ENCODE measurements at regions of chr4 and their contacts with region 1.

Region 1: DNA sequence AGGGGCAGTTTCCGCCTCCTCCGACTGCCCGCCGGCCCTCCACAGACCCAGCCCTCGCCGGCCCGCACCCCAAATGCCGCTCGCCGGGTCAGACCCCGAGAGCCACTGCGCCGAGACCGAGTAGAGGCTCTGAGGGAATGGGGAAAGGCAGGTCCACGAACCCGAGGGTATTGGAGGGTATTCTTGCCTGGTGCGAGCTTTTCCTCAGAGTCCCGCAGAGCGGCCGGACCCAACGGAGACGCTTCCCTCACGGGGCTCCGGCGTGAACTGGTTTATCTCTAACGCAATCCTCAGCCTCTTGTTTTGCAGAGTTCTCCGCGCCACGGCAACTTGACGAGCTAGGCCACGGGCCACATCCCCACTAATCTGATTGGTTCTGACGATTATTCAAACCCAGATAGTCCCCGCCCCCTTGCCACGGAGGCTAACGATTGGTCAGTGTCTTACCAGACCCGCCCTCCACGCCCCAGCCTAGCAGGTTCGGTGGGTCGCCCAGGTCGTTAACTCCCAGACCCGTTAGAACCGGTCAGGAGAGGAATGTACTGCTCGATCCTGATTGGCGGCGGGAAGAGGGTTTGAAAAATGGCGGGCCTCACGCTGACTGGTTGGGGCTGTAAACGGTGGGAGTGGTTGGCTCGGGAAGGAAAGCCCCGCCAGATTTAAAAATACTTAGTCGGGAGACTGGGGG is at the start of gene HMGB2:
- DNase-seq: peak; percentile 99
- ATAC-seq: peak; percentile 85
- H3K4me3 ChIP-seq: peak within 1 kb of the TSS; percentile 93 to 95
- H3K27ac ChIP-seq: peak within 1 kb of the TSS; percentile 96
- H3K4me1 ChIP-seq: peaks cover 10 to 26% of the 10 kb centered on the region in 2 experiments; a peak in 3 of 4 replicates
- H3K27me3 ChIP-seq: no peaks in the 10 kb centered on the region
- CTCF ChIP-seq: no peak
- POLR2A ChIP-seq: peak; percentile 78
- RAD21 ChIP-seq: no peak
- total RNA-seq, gene HMGB2: 388 TPM

Region 2: GRCh38 chr4:172900930-172901329 is 433.3 kb before region 1 on chr4:
- CTCF ChIA-PET with region 1: no interaction called
- POLR2A ChIA-PET with region 1: no interaction called
- RAD21 ChIA-PET with region 1: no interaction called
- intact Hi-C with region 1: no loop called
- DNase-seq: no peak
- ATAC-seq: no peak
- H3K4me3 ChIP-seq: no peak overlapping the region
- H3K27ac ChIP-seq: no peak overlapping the region
- H3K4me1 ChIP-seq: no peaks in the 10 kb centered on the region
- H3K27me3 ChIP-seq: no peaks in the 10 kb centered on the region
- CTCF ChIP-seq: no peak
- POLR2A ChIP-seq: no peak
- RAD21 ChIP-seq: no peak

Region 3: DNA sequence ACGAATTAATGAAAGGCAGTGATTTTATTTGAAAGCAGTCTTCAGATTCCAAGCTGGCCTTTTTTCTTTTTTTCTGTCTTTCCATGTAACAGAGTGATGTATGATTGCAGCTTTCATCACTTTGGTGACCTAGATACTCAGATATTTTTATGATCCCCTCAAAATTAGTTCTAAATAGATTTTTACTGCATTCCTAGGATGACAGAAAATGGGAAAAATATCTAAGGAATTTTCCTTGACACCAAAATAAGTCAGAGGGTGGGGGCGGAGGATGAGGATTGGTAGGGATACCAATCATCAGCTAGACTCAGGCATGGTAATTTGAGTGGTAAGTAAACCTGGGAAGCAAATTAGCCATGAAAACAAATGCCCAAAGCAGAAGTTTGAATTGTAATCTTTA is 11.8 kb after region 1 on chr4:
- CTCF ChIA-PET with region 1: no interaction called
- POLR2A ChIA-PET with region 1: interaction called, 12 read pairs
- RAD21 ChIA-PET with region 1: no interaction called
- intact Hi-C with region 1: no loop called
- DNase-seq: no peak
- ATAC-seq: no peak
- H3K4me3 ChIP-seq: no peak overlapping the region
- H3K27ac ChIP-seq: no peak overlapping the region
- H3K4me1 ChIP-seq: peaks cover 0 to 7% of the 10 kb centered on the region in 2 experiments; a peak in 1 of 4 replicates
- H3K27me3 ChIP-seq: no peaks in the 10 kb centered on the region
- CTCF ChIP-seq: no peak
- POLR2A ChIP-seq: no peak
- RAD21 ChIP-seq: no peak

Region 4: DNA sequence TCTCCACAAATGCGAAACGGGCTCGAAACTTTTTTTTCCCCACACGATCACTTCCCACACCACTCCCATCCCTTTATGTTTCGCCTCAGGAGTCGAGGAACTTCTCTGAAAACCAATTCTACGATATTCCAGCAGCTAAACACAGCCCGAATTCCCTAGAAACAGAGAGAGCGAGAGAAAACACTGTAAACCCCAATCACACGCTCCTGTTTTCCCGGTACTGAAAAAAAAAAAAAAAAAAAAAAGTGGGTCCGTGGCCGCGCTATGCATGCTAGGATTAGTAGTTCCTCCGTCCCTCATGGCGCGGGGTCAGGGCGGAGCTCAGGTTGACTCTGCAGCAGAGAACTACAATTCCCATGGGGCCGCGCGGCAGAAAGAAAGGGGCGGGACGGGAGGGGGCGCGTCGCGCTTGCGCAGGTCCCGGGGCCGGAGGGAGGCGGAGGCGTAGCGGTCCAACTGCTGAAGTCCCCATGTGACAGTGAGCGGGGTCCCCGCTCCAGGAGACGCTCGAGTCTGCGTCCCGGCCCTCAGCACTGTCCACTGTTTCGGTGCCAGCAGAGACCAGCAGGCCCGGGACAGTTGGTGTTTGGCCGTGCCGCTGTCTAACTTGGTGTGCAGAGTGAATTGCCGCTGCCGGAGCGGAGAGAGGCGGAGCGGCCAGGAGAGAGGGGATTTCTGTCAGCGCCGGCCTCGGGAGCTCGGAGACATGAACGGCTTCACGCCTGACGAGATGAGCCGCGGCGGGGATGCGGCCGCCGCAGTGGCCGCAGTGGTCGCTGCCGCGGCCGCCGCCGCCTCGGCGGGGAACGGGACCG is 36.5 kb after region 1 on chr4 and contains the start of gene SAP30:
- CTCF ChIA-PET with region 1: interaction called, 3 read pairs
- POLR2A ChIA-PET with region 1: interaction called, 54 read pairs
- RAD21 ChIA-PET with region 1: interaction called, 3 read pairs
- intact Hi-C with region 1: loop called (anchors 2 kb)
- DNase-seq: peak; percentile 94
- ATAC-seq: peak; percentile 87
- H3K4me3 ChIP-seq: peak within 1 kb of the TSS; percentile 81 to 86
- H3K27ac ChIP-seq: peak within 1 kb of the TSS; percentile 73
- H3K4me1 ChIP-seq: peaks cover 0 to 20% of the 10 kb centered on the region in 2 experiments; a peak in 3 of 4 replicates
- H3K27me3 ChIP-seq: no peaks in the 10 kb centered on the region
- CTCF ChIP-seq: no peak
- POLR2A ChIP-seq: peak; percentile 89
- RAD21 ChIP-seq: no peak
- total RNA-seq, gene SAP30: 12.0 TPM